ENCODE measurements at regions of chr12 and their contacts with region 1.

Region 1: DNA sequence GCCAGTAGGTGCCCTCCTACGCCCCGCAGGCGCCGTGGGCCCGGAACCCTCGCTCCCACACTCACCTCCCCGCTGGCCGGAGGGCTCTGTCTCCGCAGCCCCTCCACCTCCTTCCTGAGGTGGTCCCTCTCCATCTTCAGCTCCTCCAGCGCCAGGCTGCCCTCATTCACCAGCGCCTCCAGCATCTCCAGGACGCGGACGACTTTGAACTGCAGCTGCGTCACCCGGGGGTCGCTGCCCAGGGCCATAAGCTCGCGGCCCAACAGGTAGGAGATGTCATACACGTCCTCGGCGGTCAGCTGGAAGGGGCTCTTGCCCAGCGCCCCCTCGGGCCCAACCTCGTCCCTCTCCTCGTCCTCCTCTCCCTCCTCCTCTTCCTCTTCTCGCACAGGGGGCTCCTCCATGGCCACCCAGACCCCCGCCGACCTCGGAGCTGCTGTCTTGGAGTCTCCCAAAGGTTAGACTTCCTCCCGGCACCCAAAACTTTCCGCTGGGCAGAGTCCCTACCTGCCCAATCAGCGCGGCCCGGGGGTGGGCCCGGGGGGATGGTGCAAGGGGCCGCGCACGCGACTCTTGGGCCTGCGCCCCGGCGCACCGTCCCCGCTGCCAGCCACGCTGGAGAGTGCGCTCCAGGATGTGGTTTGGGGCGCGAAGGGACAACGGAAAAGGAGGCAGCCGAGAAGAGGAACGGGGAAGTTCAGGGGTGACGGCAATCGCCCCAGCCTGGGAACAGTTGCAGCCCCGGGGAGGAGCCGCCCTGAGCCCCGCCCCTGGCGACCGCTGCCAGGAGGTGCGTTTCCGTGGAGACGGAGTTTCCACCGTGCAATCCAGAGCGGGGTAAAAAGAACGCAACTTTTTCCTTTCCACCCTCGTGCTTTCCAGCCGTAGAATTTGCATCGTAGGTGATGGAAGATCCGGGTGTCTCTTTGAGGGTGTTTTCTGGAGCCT is at the start of gene RILPL2:
- DNase-seq: peak; percentile 83 to 95
- ATAC-seq: peak; percentile 88 to 91 (median 89)
- H3K4me3 ChIP-seq: peak within 1 kb of the TSS; percentile 90
- H3K4me3 Mint-ChIP-seq: peak within 1 kb of the TSS; percentile 96
- H3K27ac ChIP-seq: peak within 1 kb of the TSS; percentile 84
- H3K27ac Mint-ChIP-seq: peak within 1 kb of the TSS; percentile 85 to 96
- H3K4me1 ChIP-seq: peaks cover 42% of the 10 kb centered on the region
- H3K4me1 Mint-ChIP-seq: peaks cover 38 to 50% of the 10 kb centered on the region in 2 donors
- H3K27me3 ChIP-seq: no peaks in the 10 kb centered on the region
- H3K27me3 Mint-ChIP-seq: no peaks in the 10 kb centered on the region
- CTCF ChIP-seq: no peak
- total RNA-seq, gene RILPL2: 3.6 to 5.5 (median 4.4) TPM

Region 2: GRCh38 chr12:123024819-123025391 is 411.4 kb before region 1 on chr12:
- intact Hi-C with region 1: no loop called
- DNase-seq: peak in 1 of 2 donors; percentile 18
- ATAC-seq: peak in 1 of 3 donors; percentile 52
- H3K4me3 ChIP-seq: no peak overlapping the region
- H3K4me3 Mint-ChIP-seq: no peak overlapping the region
- H3K27ac ChIP-seq: no peak overlapping the region
- H3K27ac Mint-ChIP-seq: peak overlapping the region; percentile 5 to 24
- H3K4me1 ChIP-seq: no peaks in the 10 kb centered on the region
- H3K4me1 Mint-ChIP-seq: peaks cover 14 to 22% of the 10 kb centered on the region in 2 donors
- H3K27me3 ChIP-seq: no peaks in the 10 kb centered on the region
- H3K27me3 Mint-ChIP-seq: no peaks in the 10 kb centered on the region
- CTCF ChIP-seq: no peak

Region 3: DNA sequence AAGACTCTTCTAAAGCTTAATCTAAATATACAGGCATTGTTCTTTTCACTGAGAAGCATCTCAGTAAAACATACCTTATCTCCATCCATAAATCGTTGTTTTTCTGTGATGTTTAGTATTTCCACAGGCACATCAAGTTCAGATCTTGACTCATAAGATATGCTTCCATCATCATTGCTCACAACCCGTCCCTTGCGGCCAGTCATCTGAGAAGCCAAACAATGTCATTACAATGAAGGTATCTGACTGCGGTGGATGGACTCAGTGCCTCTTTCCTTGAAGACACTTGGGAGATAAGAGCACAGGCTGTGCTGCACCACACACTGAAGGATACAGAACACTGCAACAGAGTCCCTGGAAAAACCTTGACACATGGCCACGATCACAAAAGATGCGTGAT is 116.5 kb before region 1 on chr12:
- intact Hi-C with region 1: no loop called
- DNase-seq: no peak
- ATAC-seq: no peak
- H3K4me3 ChIP-seq: no peak overlapping the region
- H3K4me3 Mint-ChIP-seq: no peak overlapping the region
- H3K27ac ChIP-seq: no peak overlapping the region
- H3K27ac Mint-ChIP-seq: no peak overlapping the region
- H3K4me1 ChIP-seq: no peaks in the 10 kb centered on the region
- H3K4me1 Mint-ChIP-seq: no peaks in the 10 kb centered on the region
- H3K27me3 ChIP-seq: no peaks in the 10 kb centered on the region
- H3K27me3 Mint-ChIP-seq: no peaks in the 10 kb centered on the region
- CTCF ChIP-seq: no peak

Region 4: GRCh38 chr12:123388177-123388947 is 47.9 kb before region 1 on chr12:
- intact Hi-C with region 1: loop called (anchors 1 kb)
- DNase-seq: peak; percentile 68 to 86
- ATAC-seq: peak; percentile 64 to 79 (median 71)
- H3K4me3 ChIP-seq: peak overlapping the region; percentile 77
- H3K4me3 Mint-ChIP-seq: peak overlapping the region; percentile 85
- H3K27ac ChIP-seq: peak overlapping the region; percentile 88
- H3K27ac Mint-ChIP-seq: peak overlapping the region; percentile 80 to 82
- H3K4me1 ChIP-seq: peaks cover 50% of the 10 kb centered on the region
- H3K4me1 Mint-ChIP-seq: peaks cover 36 to 46% of the 10 kb centered on the region in 2 donors
- H3K27me3 ChIP-seq: no peaks in the 10 kb centered on the region
- H3K27me3 Mint-ChIP-seq: no peaks in the 10 kb centered on the region
- CTCF ChIP-seq: no peak

Region 5: GRCh38 chr12:123453165-123453564 is 16.9 kb after region 1 on chr12:
- intact Hi-C with region 1: no loop called
- DNase-seq: peak in 1 of 2 donors; percentile 35
- ATAC-seq: peak in 1 of 3 donors; percentile 9
- H3K4me3 ChIP-seq: no peak overlapping the region
- H3K4me3 Mint-ChIP-seq: no peak overlapping the region
- H3K27ac ChIP-seq: no peak overlapping the region
- H3K27ac Mint-ChIP-seq: no peak overlapping the region
- H3K4me1 ChIP-seq: peaks cover 11% of the 10 kb centered on the region
- H3K4me1 Mint-ChIP-seq: peaks cover 9 to 10% of the 10 kb centered on the region in 2 donors
- H3K27me3 ChIP-seq: no peaks in the 10 kb centered on the region
- H3K27me3 Mint-ChIP-seq: no peaks in the 10 kb centered on the region
- CTCF ChIP-seq: no peak

Region 6: DNA sequence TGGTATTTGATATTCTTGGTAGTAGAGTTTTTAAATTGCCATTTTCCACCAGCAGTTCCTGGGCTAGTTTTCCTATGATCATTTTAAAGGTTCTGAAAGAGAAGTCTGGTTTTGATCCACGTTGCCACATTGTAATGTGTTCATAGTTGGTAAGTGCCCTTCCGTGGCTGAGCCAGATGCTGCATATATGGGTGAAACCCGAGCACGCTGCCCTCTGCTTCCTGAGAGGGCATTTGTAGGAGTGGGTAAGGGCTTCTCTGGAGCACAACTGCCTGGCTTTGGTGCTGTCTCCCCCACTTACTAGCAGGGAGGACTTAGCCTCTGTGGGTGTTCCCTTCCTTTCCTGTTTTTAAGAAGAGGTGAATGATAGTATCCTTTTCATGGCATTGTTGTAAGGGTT is 28.8 kb after region 1 on chr12:
- intact Hi-C with region 1: no loop called
- DNase-seq: no peak
- ATAC-seq: no peak
- H3K4me3 ChIP-seq: no peak overlapping the region
- H3K4me3 Mint-ChIP-seq: no peak overlapping the region
- H3K27ac ChIP-seq: no peak overlapping the region
- H3K27ac Mint-ChIP-seq: peak overlapping the region in 1 of 2 donors; percentile 24
- H3K4me1 ChIP-seq: no peaks in the 10 kb centered on the region
- H3K4me1 Mint-ChIP-seq: peaks cover 9 to 26% of the 10 kb centered on the region in 2 donors
- H3K27me3 ChIP-seq: no peaks in the 10 kb centered on the region
- H3K27me3 Mint-ChIP-seq: no peaks in the 10 kb centered on the region
- CTCF ChIP-seq: no peak